Motor neuron (in vitro differentiated cells): ENCODE measurements at regions of chr13 and their contacts with region 1.

Region 1: DNA sequence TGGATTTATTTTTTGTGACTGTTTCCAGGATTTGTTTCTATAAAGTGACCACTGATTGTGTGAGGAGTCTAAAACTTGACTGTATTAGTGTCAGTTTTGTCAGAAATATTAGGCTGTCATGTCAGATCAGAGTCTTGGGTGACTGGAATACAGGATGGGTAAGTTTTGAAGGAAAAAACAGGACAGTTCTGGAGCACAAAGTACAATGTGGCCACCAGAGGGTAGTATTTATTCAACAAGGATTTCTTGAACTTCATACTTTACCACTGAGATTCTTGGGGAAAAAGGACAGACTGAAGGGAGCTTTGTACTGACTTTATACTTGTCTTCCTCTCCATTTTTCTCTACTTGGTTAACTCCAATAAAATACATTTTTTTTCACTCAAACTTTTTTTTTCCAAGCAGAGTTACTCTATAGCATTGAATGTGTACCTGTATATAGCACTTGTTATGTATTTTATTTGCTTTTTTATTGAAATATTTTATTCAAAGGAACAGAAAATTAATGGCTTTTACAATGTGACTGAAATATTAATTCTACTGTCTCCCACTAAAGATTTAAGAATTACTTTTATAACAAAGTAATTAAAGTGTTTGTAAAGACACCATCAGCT is 51.1 kb downstream of the LMO7 start:
- ATAC-seq: peak in 3 of 8 experiments; percentile 34 to 55 (median 53)
- H3K4me3 ChIP-seq: no peak overlapping the region
- H3K27ac ChIP-seq: no peak overlapping the region
- H3K4me1 ChIP-seq: no peaks in the 10 kb centered on the region

Region 2: DNA sequence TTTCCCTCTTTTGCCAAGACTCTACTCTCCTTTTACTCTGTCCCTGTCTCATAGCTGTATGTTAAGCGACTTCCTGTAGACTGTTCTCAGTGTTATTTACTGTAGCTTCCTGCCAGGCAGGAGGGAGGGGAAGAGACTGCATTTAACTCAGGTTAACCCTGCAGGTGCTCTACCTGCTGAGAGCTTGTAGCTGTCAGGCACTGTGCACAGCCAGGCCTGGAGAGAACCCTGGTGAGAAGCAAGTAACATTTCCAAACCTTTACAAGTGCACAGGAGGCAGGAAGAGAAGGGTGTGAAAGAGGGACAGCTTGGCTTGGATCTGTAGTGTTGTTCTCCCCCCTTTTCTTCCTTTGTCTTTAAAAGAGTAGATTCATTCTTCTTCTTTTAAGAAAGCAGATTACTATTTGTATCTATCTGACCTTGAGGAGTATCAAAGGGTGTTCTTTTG is 115.9 kb after region 1 on chr13:
- in situ Hi-C with region 1: loop called in 1 of 9 experiments (anchors 25 kb)
- ATAC-seq: peak in 3 of 8 experiments; percentile 13 to 66 (median 42)
- H3K4me3 ChIP-seq: no peak overlapping the region
- H3K27ac ChIP-seq: no peak overlapping the region
- H3K4me1 ChIP-seq: peaks cover 0 to 5% of the 10 kb centered on the region in 2 donors

Region 3: GRCh38 chr13:75870397-75870903 is 183.2 kb after region 1 on chr13:
- in situ Hi-C with region 1: loop called in 2 of 9 experiments (anchors 25 kb)
- ATAC-seq: peak in 1 of 8 experiments; percentile 8
- H3K4me3 ChIP-seq: no peak overlapping the region
- H3K27ac ChIP-seq: no peak overlapping the region
- H3K4me1 ChIP-seq: peaks cover 0 to 11% of the 10 kb centered on the region in 2 donors

Region 4: DNA sequence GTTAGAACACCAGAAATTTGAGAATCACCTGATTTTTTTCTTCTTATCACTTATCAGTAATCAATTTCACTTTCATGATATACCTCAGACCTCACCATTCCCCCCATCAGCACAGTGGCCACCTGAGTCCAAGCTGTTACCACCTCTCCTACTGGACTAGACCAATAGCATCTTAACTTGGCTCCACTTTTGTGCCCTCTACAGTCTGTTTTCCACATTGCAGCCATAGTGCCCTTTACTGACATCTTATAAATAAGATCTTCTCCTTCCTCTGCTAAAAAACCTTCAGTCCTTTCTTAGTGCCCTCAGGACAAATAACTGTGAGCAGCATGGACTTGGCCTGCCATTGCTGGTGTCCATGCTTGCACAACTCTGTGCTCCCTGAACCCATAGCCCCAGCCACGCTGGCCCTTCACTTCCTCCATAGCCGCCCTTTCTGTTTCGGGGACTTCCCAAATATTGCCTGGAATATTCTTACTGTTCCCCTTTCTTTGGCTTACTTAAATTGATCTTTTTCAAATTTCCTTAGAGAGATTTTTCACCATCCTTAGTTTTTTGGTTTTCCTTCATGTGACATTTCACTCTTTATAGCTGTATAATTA is 329.6 kb after region 1 on chr13:
- in situ Hi-C with region 1: loop called in 1 of 9 experiments (anchors 25 kb)
- ATAC-seq: peak in 3 of 8 experiments; percentile 47 to 78 (median 68)
- H3K4me3 ChIP-seq: no peak overlapping the region
- H3K27ac ChIP-seq: no peak overlapping the region
- H3K4me1 ChIP-seq: no peaks in the 10 kb centered on the region

Region 5: GRCh38 chr13:76473552-76474134 is 786.4 kb after region 1 on chr13:
- in situ Hi-C with region 1: loop called in 6 of 9 experiments (anchors 25 kb)
- ATAC-seq: peak; percentile 80 to 100 (median 94)
- H3K4me3 ChIP-seq: no peak overlapping the region
- H3K27ac ChIP-seq: no peak overlapping the region
- H3K4me1 ChIP-seq: no peaks in the 10 kb centered on the region

Region 6: GRCh38 chr13:76711550-76712182 is 1024.4 kb after region 1 on chr13:
- in situ Hi-C with region 1: no loop called
- ATAC-seq: peak in 3 of 8 experiments; percentile 69 to 90 (median 84)
- H3K4me3 ChIP-seq: no peak overlapping the region
- H3K27ac ChIP-seq: no peak overlapping the region
- H3K4me1 ChIP-seq: peaks cover 0 to 13% of the 10 kb centered on the region in 2 donors

Region 7: GRCh38 chr13:76903544-76904162 is 1216.4 kb after region 1 on chr13:
- in situ Hi-C with region 1: loop called in 2 of 9 experiments (anchors 25 kb)
- ATAC-seq: peak in 6 of 8 experiments; percentile 55 to 82 (median 60)
- H3K4me3 ChIP-seq: no peak overlapping the region
- H3K27ac ChIP-seq: no peak overlapping the region
- H3K4me1 ChIP-seq: no peaks in the 10 kb centered on the region